Activated CD4-positive, alpha-beta memory T cell treated with anti-CD3 and anti-CD28 coated beads, Interleukin-2, amount 10 ng/mL, durations not matched to agents 7 days and 5 days (primary cell): ENCODE measurements at regions of chr2 and their contacts with region 1.

Region 1: GRCh38 chr2:9843229-9844035 is at the start of gene TAF1B:
- DNase-seq: peak; percentile 91
- H3K4me3 Mint-ChIP-seq: peak within 1 kb of the TSS; percentile 87
- H3K27ac Mint-ChIP-seq: peak within 1 kb of the TSS; percentile 87
- H3K4me1 Mint-ChIP-seq: peaks cover 49% of the 10 kb centered on the region
- H3K27me3 Mint-ChIP-seq: no peaks in the 10 kb centered on the region
- total RNA-seq, gene TAF1B: 49.4 to 54.7 TPM

Region 2: GRCh38 chr2:9423100-9423921 is 420.1 kb before region 1 on chr2 and contains the starts of genes CPSF3 and ITGB1BP1:
- CTCF ChIA-PET with region 1: no interaction called
- POLR2A ChIA-PET with region 1: interaction called, 12 read pairs
- DNase-seq: peak; percentile 97
- H3K4me3 Mint-ChIP-seq: no peak within 1 kb of the TSS
- H3K27ac Mint-ChIP-seq: no peak within 1 kb of the TSS
- H3K4me1 Mint-ChIP-seq: peaks cover 40% of the 10 kb centered on the region
- H3K27me3 Mint-ChIP-seq: no peaks in the 10 kb centered on the region
- total RNA-seq, gene CPSF3: 49.7 to 51.7 TPM
- total RNA-seq, gene ITGB1BP1: 112 to 119 TPM

Region 3: GRCh38 chr2:9778012-9778411 is 65.4 kb before region 1 on chr2:
- CTCF ChIA-PET with region 1: interaction called, 5 read pairs
- POLR2A ChIA-PET with region 1: interaction called, 13 read pairs
- DNase-seq: peak; percentile 41
- H3K4me3 Mint-ChIP-seq: no peak overlapping the region
- H3K27ac Mint-ChIP-seq: no peak overlapping the region
- H3K4me1 Mint-ChIP-seq: peaks cover 54% of the 10 kb centered on the region
- H3K27me3 Mint-ChIP-seq: no peaks in the 10 kb centered on the region

Region 4: GRCh38 chr2:9813312-9814133 is 29.9 kb before region 1 on chr2:
- CTCF ChIA-PET with region 1: interaction called, 44 read pairs
- POLR2A ChIA-PET with region 1: interaction called, 29 read pairs
- DNase-seq: peak; percentile 79
- H3K4me3 Mint-ChIP-seq: no peak overlapping the region
- H3K27ac Mint-ChIP-seq: no peak overlapping the region
- H3K4me1 Mint-ChIP-seq: peaks cover 35% of the 10 kb centered on the region
- H3K27me3 Mint-ChIP-seq: peaks cover 7% of the 10 kb centered on the region

Region 5: DNA sequence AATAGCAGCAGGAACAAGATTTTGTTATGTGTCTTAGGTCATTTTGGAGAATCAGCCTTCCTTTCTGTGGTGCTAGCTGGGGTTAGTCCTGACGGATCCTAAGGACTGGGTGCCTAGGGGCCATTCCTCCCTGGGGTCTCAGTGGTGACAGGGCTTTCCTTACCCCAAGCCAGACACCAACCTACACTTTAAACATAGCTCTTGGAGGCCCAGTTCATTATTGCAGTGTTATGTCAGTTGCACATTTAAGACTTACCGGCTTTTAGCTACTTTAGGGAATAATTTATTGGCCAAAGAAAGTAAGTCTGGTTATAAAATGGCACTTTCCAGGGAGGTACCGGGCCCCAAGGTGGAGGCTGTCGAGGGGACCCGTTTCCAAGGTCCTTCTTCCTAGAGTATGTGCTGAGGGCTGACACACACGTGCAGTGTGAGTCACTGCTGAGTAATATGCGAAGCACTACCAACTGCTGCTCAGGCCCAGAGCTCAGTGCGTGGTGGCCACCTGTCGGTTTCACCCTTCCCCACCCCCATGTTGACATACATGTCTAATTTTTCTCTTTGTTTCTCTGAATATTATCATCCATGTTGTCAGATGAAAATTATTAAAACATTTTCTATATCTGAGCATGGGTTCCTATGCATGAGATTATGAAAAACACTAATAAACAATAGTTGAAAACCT is 71.1 kb after region 1 on chr2:
- CTCF ChIA-PET with region 1: no interaction called
- POLR2A ChIA-PET with region 1: interaction called, 12 read pairs
- DNase-seq: peak; percentile 67
- H3K4me3 Mint-ChIP-seq: no peak overlapping the region
- H3K27ac Mint-ChIP-seq: no peak overlapping the region
- H3K4me1 Mint-ChIP-seq: peaks cover 12% of the 10 kb centered on the region
- H3K27me3 Mint-ChIP-seq: no peaks in the 10 kb centered on the region

Region 6: DNA sequence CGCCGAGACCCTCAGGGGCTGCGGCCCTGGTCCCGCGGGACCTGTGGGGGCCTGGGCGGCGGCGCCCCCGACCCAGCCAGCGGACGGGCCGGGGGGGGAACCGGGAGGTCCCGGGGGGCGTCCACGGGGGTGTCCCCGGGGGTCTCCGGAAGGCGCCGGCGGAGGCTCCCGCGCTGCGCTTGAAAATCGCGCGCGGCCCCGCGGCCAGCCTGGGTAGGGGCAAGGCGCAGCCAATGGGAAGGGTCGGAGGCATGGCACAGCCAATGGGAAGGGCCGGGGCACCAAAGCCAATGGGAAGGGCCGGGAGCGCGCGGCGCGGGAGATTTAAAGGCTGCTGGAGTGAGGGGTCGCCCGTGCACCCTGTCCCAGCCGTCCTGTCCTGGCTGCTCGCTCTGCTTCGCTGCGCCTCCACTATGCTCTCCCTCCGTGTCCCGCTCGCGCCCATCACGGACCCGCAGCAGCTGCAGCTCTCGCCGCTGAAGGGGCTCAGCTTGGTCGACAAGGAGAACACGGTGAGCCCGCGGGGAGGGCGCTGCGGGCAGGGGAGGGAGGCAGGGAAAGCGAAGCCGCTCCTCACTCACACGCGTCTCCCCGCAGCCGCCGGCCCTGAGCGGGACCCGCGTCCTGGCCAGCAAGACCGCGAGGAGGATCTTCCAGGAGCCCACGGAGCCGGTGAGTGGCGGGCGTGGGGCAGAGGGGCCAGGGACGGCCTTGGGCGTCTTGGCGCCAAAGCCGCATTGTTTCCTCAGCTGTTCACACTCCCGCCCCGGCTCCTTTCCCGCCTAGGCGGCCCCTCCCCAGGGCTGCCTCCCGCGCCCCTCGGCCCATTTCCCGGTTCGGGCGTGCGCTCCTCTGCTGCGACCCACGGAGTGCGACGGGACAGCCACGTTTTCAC is 279.2 kb after region 1 on chr2 and contains the start of gene RRM2:
- CTCF ChIA-PET with region 1: interaction called, 3 read pairs
- POLR2A ChIA-PET with region 1: interaction called, 23 read pairs
- DNase-seq: peak; percentile 96
- H3K4me3 Mint-ChIP-seq: peak within 1 kb of the TSS; percentile 97
- H3K27ac Mint-ChIP-seq: peak within 1 kb of the TSS; percentile 98
- H3K4me1 Mint-ChIP-seq: peaks cover 67% of the 10 kb centered on the region
- H3K27me3 Mint-ChIP-seq: no peaks in the 10 kb centered on the region
- total RNA-seq, gene RRM2: 546 to 570 TPM